ENCODE measurements at regions of chr12 and their contacts with region 1.

Region 1: GRCh38 chr12:12562585-12563261 is at the start of gene DUSP16:
- DNase-seq: peak; percentile 97 to 98 (median 97)
- ATAC-seq: peak; percentile 82 to 95 (median 86)
- H3K4me3 ChIP-seq: peak within 1 kb of the TSS; percentile 60 to 66 (median 60)
- H3K27ac ChIP-seq: peak within 1 kb of the TSS; percentile 100
- H3K4me1 ChIP-seq: peaks cover 0 to 24% (median 3%) of the 10 kb centered on the region in 4 donors
- H3K27me3 ChIP-seq: no peaks in the 10 kb centered on the region
- CTCF ChIP-seq: peak; percentile 9 to 37 (median 20)
- POLR2A ChIP-seq: peak; percentile 94
- total RNA-seq, gene DUSP16: 41.9 to 74.2 (median 48.4) TPM

Region 2: GRCh38 chr12:12046401-12046800 is 516.3 kb before region 1 on chr12:
- intact Hi-C with region 1: no loop called
- DNase-seq: no peak
- ATAC-seq: no peak
- H3K4me3 ChIP-seq: no peak overlapping the region
- H3K27ac ChIP-seq: no peak overlapping the region
- H3K4me1 ChIP-seq: no peaks in the 10 kb centered on the region
- H3K27me3 ChIP-seq: no peaks in the 10 kb centered on the region
- CTCF ChIP-seq: no peak
- POLR2A ChIP-seq: no peak

Region 3: DNA sequence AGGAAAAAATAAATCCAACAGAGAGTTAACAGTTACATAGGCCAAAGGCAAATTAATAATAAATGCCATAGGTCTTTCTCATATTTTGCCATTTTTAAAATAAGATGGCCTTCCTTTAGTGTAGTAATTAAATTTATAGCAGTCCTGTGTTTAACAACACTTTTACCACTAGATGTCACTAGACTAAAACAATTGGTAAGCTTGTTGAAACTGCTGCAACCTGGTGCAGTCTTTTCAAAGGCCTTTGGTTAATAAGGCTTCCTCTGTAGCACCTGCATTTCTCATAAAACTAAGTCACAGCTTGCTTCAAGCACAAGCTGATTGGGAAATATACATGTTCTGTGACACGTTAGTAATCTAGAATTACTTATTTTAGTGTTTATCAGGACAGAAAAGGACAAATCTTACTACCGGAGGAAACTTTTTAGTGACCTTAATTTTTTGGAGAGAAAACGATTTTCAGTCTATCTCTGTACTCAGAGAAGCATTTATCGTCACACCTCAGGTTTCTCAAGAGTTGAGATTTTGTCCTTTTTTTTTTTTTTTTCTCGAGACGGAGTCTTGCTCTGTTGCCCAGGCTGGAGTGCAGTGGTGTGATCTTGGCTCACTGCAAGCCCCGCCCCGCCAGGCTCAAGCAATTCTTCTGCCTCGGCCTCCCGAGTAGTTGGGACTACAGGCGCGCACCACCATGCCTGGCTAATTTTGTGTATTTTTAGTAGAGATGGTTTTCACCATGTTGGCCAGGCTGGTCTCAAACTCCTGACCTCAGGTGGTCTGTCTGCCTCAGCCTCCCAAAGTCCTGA is 185.9 kb before region 1 on chr12:
- intact Hi-C with region 1: loop called in 1 of 2 experiments (anchors 10 kb)
- DNase-seq: no peak
- ATAC-seq: peak; percentile 83 to 91 (median 84)
- H3K4me3 ChIP-seq: no peak overlapping the region
- H3K27ac ChIP-seq: peak overlapping the region in 2 of 3 donors; percentile 36 to 44
- H3K4me1 ChIP-seq: peaks cover 0 to 32% (median 12%) of the 10 kb centered on the region in 4 donors
- H3K27me3 ChIP-seq: no peaks in the 10 kb centered on the region
- CTCF ChIP-seq: peak; percentile 70 to 95 (median 80)
- POLR2A ChIP-seq: no peak

Region 4: DNA sequence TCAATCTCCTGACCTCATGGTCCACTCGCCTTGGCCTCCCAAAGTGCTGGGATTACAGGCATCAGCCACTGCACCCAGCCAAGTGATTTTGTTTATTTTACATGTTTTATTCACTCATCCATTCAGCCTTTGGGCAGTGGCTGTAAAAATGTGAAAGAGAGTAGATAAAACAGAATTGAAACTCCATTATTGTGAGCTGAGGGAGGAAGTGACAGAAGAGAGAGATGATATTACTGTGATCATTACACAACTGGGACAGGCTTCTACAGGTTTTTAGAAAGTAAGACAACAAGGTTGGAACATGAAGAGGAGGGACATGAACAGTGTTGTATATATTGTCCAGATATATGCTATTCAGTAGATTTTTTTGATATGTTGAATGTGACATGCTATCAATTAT is 73.9 kb after region 1 on chr12:
- intact Hi-C with region 1: no loop called
- DNase-seq: no peak
- ATAC-seq: no peak
- H3K4me3 ChIP-seq: no peak overlapping the region
- H3K27ac ChIP-seq: no peak overlapping the region
- H3K4me1 ChIP-seq: no peaks in the 10 kb centered on the region
- H3K27me3 ChIP-seq: no peaks in the 10 kb centered on the region
- CTCF ChIP-seq: no peak
- POLR2A ChIP-seq: no peak

Region 5: GRCh38 chr12:12696562-12697383 is 134.1 kb after region 1 on chr12:
- intact Hi-C with region 1: loop called in 1 of 2 experiments (anchors 10 kb)
- DNase-seq: peak; percentile 93 to 95 (median 94)
- ATAC-seq: peak; percentile 90 to 93 (median 93)
- H3K4me3 ChIP-seq: peak overlapping the region; percentile 36 to 65 (median 51)
- H3K27ac ChIP-seq: peak overlapping the region; percentile 91 to 99 (median 95)
- H3K4me1 ChIP-seq: no peaks in the 10 kb centered on the region
- H3K27me3 ChIP-seq: no peaks in the 10 kb centered on the region
- CTCF ChIP-seq: no peak
- POLR2A ChIP-seq: peak; percentile 69